ENCODE measurements at regions of chr2 and their contacts with region 1.

Region 1: GRCh38 chr2:25521665-25522387 is 151.6 kb downstream of the DTNB start:
- DNase-seq: peak; percentile 91
- H3K4me3 ChIP-seq: peak overlapping the region; percentile 18
- H3K27ac ChIP-seq: peak overlapping the region; percentile 45
- H3K4me1 ChIP-seq: peaks cover 30% of the 10 kb centered on the region
- H3K27me3 ChIP-seq: no peaks in the 10 kb centered on the region
- CTCF ChIP-seq: peak; percentile 91

Region 2: GRCh38 chr2:25309402-25309801 is 212.4 kb before region 1 on chr2:
- CTCF ChIA-PET with region 1: interaction called, 3 read pairs
- POLR2A ChIA-PET with region 1: no interaction called
- intact Hi-C with region 1: loop called (anchors 5 kb)
- DNase-seq: peak; percentile 82
- H3K4me3 ChIP-seq: no peak overlapping the region
- H3K27ac ChIP-seq: no peak overlapping the region
- H3K4me1 ChIP-seq: peaks cover 61% of the 10 kb centered on the region
- H3K27me3 ChIP-seq: no peaks in the 10 kb centered on the region
- CTCF ChIP-seq: peak; percentile 68

Region 3: GRCh38 chr2:25376750-25377621 is 144.8 kb before region 1 on chr2:
- CTCF ChIA-PET with region 1: interaction called, 7 read pairs
- POLR2A ChIA-PET with region 1: no interaction called
- intact Hi-C with region 1: loop called (anchors 5 kb)
- DNase-seq: peak; percentile 96
- H3K4me3 ChIP-seq: peak overlapping the region; percentile 14
- H3K27ac ChIP-seq: peak overlapping the region; percentile 44
- H3K4me1 ChIP-seq: peaks cover 13% of the 10 kb centered on the region
- H3K27me3 ChIP-seq: no peaks in the 10 kb centered on the region
- CTCF ChIP-seq: peak; percentile 86

Region 4: GRCh38 chr2:25419678-25420242 is 102.1 kb before region 1 on chr2:
- CTCF ChIA-PET with region 1: no interaction called
- POLR2A ChIA-PET with region 1: no interaction called
- intact Hi-C with region 1: loop called (anchors 5 kb)
- DNase-seq: no peak
- H3K4me3 ChIP-seq: no peak overlapping the region
- H3K27ac ChIP-seq: peak overlapping the region; percentile 81
- H3K4me1 ChIP-seq: peaks cover 57% of the 10 kb centered on the region
- H3K27me3 ChIP-seq: no peaks in the 10 kb centered on the region
- CTCF ChIP-seq: no peak

Region 5: DNA sequence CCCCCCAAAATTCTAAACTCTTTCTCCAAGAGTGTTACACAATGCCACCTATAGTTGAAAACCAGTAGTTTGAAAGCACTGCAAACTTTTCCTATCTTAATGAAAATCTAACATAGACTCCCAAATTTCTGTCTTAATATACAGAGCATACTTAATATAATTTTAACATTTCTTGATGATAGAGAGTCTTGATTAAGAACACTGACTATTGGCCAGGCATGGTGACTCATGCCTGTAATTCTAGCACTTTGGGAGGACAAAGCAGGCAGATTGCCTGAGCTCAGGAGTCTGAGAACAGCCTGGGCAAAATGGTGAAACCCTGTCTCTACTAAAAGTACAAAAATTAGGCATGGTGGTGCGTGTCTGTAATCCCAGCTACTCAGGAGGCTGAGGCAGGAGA is 322.3 kb after region 1 on chr2:
- CTCF ChIA-PET with region 1: no interaction called
- POLR2A ChIA-PET with region 1: no interaction called
- intact Hi-C with region 1: no loop called
- DNase-seq: no peak
- H3K4me3 ChIP-seq: no peak overlapping the region
- H3K27ac ChIP-seq: no peak overlapping the region
- H3K4me1 ChIP-seq: no peaks in the 10 kb centered on the region
- H3K27me3 ChIP-seq: no peaks in the 10 kb centered on the region
- CTCF ChIP-seq: no peak